Heart left ventricle (tissue), 16 donors: ENCODE measurements at regions of chr16 and their contacts with region 1.

Region 1: DNA sequence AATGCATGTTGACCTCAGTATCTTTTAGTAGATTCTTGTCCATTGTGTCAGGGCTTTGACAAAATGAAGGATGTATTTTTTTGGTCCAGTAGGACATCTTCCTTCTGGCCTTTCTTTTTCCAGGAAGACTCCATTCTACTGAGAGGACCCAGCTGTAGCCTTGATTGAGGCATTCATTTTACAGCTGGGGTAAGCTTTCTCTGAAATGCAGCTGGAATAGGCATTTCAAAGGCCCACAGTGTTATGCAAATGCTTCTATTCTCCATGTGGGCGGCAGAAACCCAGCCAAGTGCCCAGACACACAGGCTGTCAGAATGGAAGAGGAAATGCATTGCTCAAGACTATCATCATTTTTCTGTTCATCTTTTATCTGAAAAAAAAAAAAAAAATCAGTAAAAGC is 629.0 kb upstream of the CDH8 start:
- DNase-seq: no peak
- ATAC-seq: no peak
- H3K4me3 ChIP-seq: no peak overlapping the region
- H3K27ac ChIP-seq: no peak overlapping the region
- H3K4me1 ChIP-seq: no peaks in the 10 kb centered on the region
- H3K27me3 ChIP-seq: no peaks in the 10 kb centered on the region
- CTCF ChIP-seq: no peak
- POLR2A ChIP-seq: no peak

Region 2: GRCh38 chr16:62625326-62625725 is 39.9 kb before region 1 on chr16:
- intact Hi-C with region 1: no loop called
- DNase-seq: no peak
- ATAC-seq: no peak
- H3K4me3 ChIP-seq: no peak overlapping the region
- H3K27ac ChIP-seq: no peak overlapping the region
- H3K4me1 ChIP-seq: no peaks in the 10 kb centered on the region
- H3K27me3 ChIP-seq: no peaks in the 10 kb centered on the region
- CTCF ChIP-seq: no peak
- POLR2A ChIP-seq: no peak

Region 3: GRCh38 chr16:62681819-62682218 is 16.6 kb after region 1 on chr16:
- intact Hi-C with region 1: loop called in 1 of 10 experiments (anchors 2 kb)
- DNase-seq: no peak
- ATAC-seq: no peak
- H3K4me3 ChIP-seq: no peak overlapping the region
- H3K27ac ChIP-seq: no peak overlapping the region
- H3K4me1 ChIP-seq: no peaks in the 10 kb centered on the region
- H3K27me3 ChIP-seq: no peaks in the 10 kb centered on the region
- CTCF ChIP-seq: no peak
- POLR2A ChIP-seq: no peak